GM12878 (cell line): ENCODE measurements at regions of chr2 and their contacts with region 1.

Region 1: GRCh38 chr2:146801886-146802285 is 1042.9 kb upstream of the ACVR2A start:
- DNase-seq: no peak
- ATAC-seq: no peak
- H3K4me3 ChIP-seq: no peak overlapping the region
- H3K27ac ChIP-seq: no peak overlapping the region
- H3K4me1 ChIP-seq: no peaks in the 10 kb centered on the region
- H3K27me3 ChIP-seq: no peaks in the 10 kb centered on the region
- CTCF ChIP-seq: no peak
- EP300 ChIP-seq: no peak
- POLR2A ChIP-seq: no peak
- RAD21 ChIP-seq: no peak

Region 2: GRCh38 chr2:146777181-146777580 is 24.7 kb before region 1 on chr2:
- CTCF ChIA-PET with region 1: no interaction called
- POLR2A ChIA-PET with region 1: no interaction called
- RAD21 ChIA-PET with region 1: no interaction called
- SMC1A ChIA-PET with region 1: interaction called, 12 read pairs
- in situ Hi-C with region 1: no loop called
- intact Hi-C with region 1: no loop called
- DNase-seq: no peak
- ATAC-seq: no peak
- H3K4me3 ChIP-seq: no peak overlapping the region
- H3K27ac ChIP-seq: no peak overlapping the region
- H3K4me1 ChIP-seq: no peaks in the 10 kb centered on the region
- H3K27me3 ChIP-seq: no peaks in the 10 kb centered on the region
- CTCF ChIP-seq: no peak
- EP300 ChIP-seq: no peak
- POLR2A ChIP-seq: no peak
- RAD21 ChIP-seq: no peak

Region 3: DNA sequence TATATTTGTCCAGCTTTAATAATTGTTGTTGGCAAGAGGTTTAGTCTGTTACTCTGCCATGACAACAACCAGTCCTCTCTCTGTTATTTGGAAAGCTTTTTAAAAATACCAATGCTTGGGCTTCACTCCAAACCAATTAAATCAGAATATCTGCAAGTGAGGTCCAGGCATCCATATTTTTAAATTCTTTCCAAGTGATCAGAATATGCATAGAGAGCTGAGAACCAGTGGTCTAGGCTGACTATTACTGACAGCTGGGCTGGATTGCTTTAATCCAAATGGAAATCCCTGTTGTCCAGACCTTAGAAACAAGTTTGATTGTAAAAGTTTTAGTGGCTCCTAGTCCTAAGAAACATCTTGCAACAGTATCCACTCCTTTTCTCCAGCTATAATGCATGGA is 16.8 kb before region 1 on chr2:
- CTCF ChIA-PET with region 1: interaction called, 4 read pairs
- POLR2A ChIA-PET with region 1: interaction called, 4 read pairs
- RAD21 ChIA-PET with region 1: interaction called, 3 read pairs
- SMC1A ChIA-PET with region 1: interaction called, 34 read pairs
- in situ Hi-C with region 1: no loop called
- intact Hi-C with region 1: no loop called
- DNase-seq: no peak
- ATAC-seq: no peak
- H3K4me3 ChIP-seq: no peak overlapping the region
- H3K27ac ChIP-seq: no peak overlapping the region
- H3K4me1 ChIP-seq: no peaks in the 10 kb centered on the region
- H3K27me3 ChIP-seq: no peaks in the 10 kb centered on the region
- CTCF ChIP-seq: no peak
- EP300 ChIP-seq: no peak
- POLR2A ChIP-seq: no peak
- RAD21 ChIP-seq: no peak

Region 4: GRCh38 chr2:146867472-146867986 is 65.6 kb after region 1 on chr2:
- CTCF ChIA-PET with region 1: no interaction called
- POLR2A ChIA-PET with region 1: no interaction called
- RAD21 ChIA-PET with region 1: no interaction called
- SMC1A ChIA-PET with region 1: no interaction called
- in situ Hi-C with region 1: no loop called
- intact Hi-C with region 1: no loop called
- DNase-seq: no peak
- ATAC-seq: peak; percentile 59
- H3K4me3 ChIP-seq: no peak overlapping the region
- H3K27ac ChIP-seq: no peak overlapping the region
- H3K4me1 ChIP-seq: no peaks in the 10 kb centered on the region
- H3K27me3 ChIP-seq: no peaks in the 10 kb centered on the region
- CTCF ChIP-seq: no peak
- EP300 ChIP-seq: no peak
- POLR2A ChIP-seq: no peak
- RAD21 ChIP-seq: no peak